ENCODE measurements at regions of chr2 and their contacts with region 1.

Region 1: DNA sequence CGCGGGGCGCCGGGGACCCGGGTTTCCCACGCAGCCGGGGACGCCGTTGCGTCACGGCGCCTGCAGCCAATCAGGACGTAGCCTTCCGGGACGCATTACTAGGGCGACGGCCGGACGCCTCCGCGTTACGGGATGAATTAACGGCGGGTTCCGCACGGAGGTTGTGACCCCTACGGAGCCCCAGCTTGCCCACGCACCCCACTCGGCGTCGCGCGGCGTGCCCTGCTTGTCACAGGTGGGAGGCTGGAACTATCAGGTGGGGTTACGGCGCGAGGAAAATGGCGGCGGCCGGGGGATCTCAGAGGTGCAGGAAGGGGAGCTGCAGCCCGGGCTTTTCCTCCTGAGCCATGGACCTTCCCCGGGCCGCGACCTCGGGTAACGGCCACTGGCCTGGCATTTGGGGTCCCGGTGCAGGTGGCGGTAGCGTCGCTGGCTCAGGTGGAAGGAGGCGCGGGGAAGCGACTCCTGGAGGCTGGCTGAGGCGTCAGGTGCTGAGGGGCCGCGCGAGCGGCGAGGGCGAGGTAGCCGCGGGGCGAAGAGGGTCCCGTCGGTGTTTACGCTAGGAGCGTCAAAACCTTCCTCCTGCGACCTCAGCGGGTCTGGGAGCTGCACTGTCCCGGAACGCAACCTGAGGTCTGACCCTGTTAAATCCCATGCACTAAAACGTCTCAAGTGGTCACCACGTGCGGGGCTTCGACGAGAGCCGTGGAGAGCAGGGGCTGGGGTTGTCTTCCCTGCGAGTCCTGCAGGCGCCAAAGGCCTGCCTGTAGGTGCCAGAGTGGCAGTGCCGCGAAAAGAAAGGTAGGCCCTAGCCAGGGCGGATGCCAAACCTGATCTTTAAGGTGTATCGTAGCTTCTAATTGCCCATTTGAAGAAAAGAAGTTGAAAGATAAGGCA is at the start of gene LCLAT1:
- DNase-seq: no peak
- H3K4me3 ChIP-seq: peak within 1 kb of the TSS; percentile 79 to 82
- H3K27ac ChIP-seq: peak within 1 kb of the TSS; percentile 66
- H3K4me1 ChIP-seq: peaks cover 20% of the 10 kb centered on the region
- H3K27me3 ChIP-seq: no peaks in the 10 kb centered on the region
- CTCF ChIP-seq: no peak
- POLR2A ChIP-seq: no peak
- total RNA-seq, gene LCLAT1: 19.6 TPM

Region 2: GRCh38 chr2:30231212-30231995 is 216.0 kb before region 1 on chr2 and contains the start of gene LBH:
- intact Hi-C with region 1: loop called (anchors 10 kb)
- DNase-seq: peak in 1 of 2 donors; percentile 93
- H3K4me3 ChIP-seq: peak within 1 kb of the TSS; percentile 58 to 93
- H3K27ac ChIP-seq: peak within 1 kb of the TSS; percentile 79
- H3K4me1 ChIP-seq: peaks cover 46% of the 10 kb centered on the region
- H3K27me3 ChIP-seq: no peaks in the 10 kb centered on the region
- CTCF ChIP-seq: no peak
- POLR2A ChIP-seq: peak; percentile 77 to 99
- total RNA-seq, gene LBH: 28.0 TPM

Measured in vagina (tissue), 2 donors.